HEK293 (cell line): ENCODE measurements at regions of chr21 and their contacts with region 1.

Region 1: GRCh38 chr21:17387030-17387617 is 125.7 kb upstream of the CXADR start:
- H3K4me3 ChIP-seq: no peak overlapping the region
- H3K27ac ChIP-seq: no peak overlapping the region
- H3K4me1 ChIP-seq: no peaks in the 10 kb centered on the region
- CTCF ChIP-seq: no peak

Region 2: GRCh38 chr21:17359781-17360180 is 27.3 kb before region 1 on chr21:
- CTCF ChIA-PET with region 1: no interaction called
- POLR2A ChIA-PET with region 1: no interaction called
- H3K4me3 ChIP-seq: no peak overlapping the region
- H3K27ac ChIP-seq: no peak overlapping the region
- H3K4me1 ChIP-seq: no peaks in the 10 kb centered on the region
- CTCF ChIP-seq: no peak

Region 3: GRCh38 chr21:17436626-17437171 is 49.6 kb after region 1 on chr21:
- CTCF ChIA-PET with region 1: interaction called, 11 read pairs
- POLR2A ChIA-PET with region 1: no interaction called
- H3K4me3 ChIP-seq: no peak overlapping the region
- H3K27ac ChIP-seq: peak overlapping the region; percentile 51
- H3K4me1 ChIP-seq: peaks cover 33% of the 10 kb centered on the region
- CTCF ChIP-seq: no peak

Region 4: DNA sequence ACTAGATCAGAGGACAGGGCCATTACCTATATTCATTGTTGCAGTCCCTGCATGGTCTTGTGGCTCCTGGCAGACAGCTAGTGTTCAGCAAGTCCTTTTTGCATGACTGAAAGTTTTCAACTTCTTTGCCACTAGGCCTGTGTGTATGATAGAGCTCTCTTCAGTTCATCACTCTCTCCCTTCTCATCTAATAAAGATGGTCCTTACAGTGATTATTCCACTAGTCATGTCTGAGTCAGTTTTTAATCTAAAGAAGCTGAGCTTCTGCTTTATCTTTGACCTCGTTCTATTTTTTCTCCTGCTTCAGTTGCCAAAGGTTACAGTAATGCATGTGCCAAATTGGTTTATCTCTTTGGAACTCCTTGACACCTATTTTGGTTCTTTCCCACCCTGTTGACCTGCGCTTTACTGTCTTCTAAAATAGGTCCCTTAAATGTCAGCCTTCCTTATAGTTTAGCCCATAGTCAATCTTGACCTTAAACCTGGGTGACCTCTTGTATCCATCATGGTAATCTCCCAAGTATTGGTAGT is 132.1 kb after region 1 on chr21:
- CTCF ChIA-PET with region 1: interaction called, 28 read pairs
- POLR2A ChIA-PET with region 1: no interaction called
- H3K4me3 ChIP-seq: no peak overlapping the region
- H3K27ac ChIP-seq: no peak overlapping the region
- H3K4me1 ChIP-seq: peaks cover 10% of the 10 kb centered on the region
- CTCF ChIP-seq: no peak

Region 5: DNA sequence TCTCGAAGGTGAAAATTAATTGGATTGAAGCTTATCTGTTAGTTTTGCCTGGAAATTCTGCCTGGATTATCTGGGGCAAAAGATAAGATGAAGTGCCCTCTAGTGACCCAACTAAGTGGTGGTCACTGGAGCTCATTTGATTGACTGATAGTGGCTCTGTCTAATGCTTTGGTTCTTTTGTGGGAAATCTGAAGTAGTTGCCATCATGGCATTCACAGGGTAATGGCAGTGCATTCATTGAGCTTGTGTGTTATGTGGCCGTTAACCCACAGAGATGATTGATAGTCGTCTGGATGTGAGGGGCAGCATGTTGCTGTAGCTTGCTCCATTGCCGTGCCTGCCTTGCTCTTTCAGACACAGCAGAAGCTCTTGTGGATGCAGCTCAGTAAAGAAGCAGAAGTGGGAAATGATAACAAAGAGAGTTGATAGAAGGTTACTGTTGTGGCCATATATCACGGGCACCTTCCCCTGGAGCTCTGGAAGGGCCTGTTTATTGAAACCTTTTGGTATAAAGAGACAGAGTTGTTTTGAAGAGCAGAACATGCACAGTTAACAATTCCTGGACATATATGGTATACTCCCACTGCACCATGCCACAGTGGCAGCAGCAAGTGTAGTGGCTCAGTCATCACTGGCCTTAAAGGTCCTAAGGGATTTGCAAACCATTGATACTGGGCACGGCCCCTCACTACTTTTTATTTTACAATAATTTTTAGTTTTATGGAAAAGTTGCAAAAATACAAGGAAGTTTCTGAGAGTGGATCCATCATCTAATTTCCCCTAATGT is 167.7 kb after region 1 on chr21:
- CTCF ChIA-PET with region 1: interaction called, 19 read pairs
- POLR2A ChIA-PET with region 1: interaction called, 4 read pairs
- H3K4me3 ChIP-seq: no peak overlapping the region
- H3K27ac ChIP-seq: no peak overlapping the region
- H3K4me1 ChIP-seq: peaks cover 24% of the 10 kb centered on the region
- CTCF ChIP-seq: no peak

Region 6: GRCh38 chr21:17602874-17603273 is 215.8 kb after region 1 on chr21:
- CTCF ChIA-PET with region 1: interaction called, 12 read pairs
- POLR2A ChIA-PET with region 1: no interaction called
- H3K4me3 ChIP-seq: no peak overlapping the region
- H3K27ac ChIP-seq: peak overlapping the region; percentile 19; the same call in 1 of the 2 replicates
- H3K4me1 ChIP-seq: peaks cover 23% of the 10 kb centered on the region
- CTCF ChIP-seq: no peak